Activated CD4-positive, alpha-beta T cell treated with anti-CD3 and anti-CD28 coated beads, Interleukin-2, amount 10 ng/mL, durations not matched to agents 24 days and 14 days (primary cell): ENCODE measurements at regions of chr11 and their contacts with region 1.

Region 1: GRCh38 chr11:61429691-61430582 is at the starts of genes CPSF7 and SDHAF2:
- DNase-seq: peak; percentile 99
- H3K4me3 Mint-ChIP-seq: peak within 1 kb of the TSS; percentile 97
- H3K27ac Mint-ChIP-seq: peak within 1 kb of the TSS; percentile 98
- H3K4me1 Mint-ChIP-seq: peaks cover 43% of the 10 kb centered on the region
- H3K27me3 Mint-ChIP-seq: no peaks in the 10 kb centered on the region
- total RNA-seq, gene CPSF7: 140 and 143 TPM in 2 replicates
- total RNA-seq, gene SDHAF2: 46.0 and 46.1 TPM in 2 replicates

Region 2: GRCh38 chr11:60363542-60364510 is 1066.1 kb before region 1 on chr11:
- intact Hi-C with region 1: no loop called
- DNase-seq: peak; percentile 88
- H3K4me3 Mint-ChIP-seq: no peak overlapping the region
- H3K27ac Mint-ChIP-seq: no peak overlapping the region
- H3K4me1 Mint-ChIP-seq: no peaks in the 10 kb centered on the region
- H3K27me3 Mint-ChIP-seq: peaks cover 8% of the 10 kb centered on the region

Region 3: GRCh38 chr11:61827571-61828378 is 397.8 kb after region 1 on chr11 and contains the start of gene FADS2:
- intact Hi-C with region 1: loop called (anchors 10 kb)
- DNase-seq: peak; percentile 98
- H3K4me3 Mint-ChIP-seq: peak within 1 kb of the TSS; percentile 92
- H3K27ac Mint-ChIP-seq: peak within 1 kb of the TSS; percentile 95
- H3K4me1 Mint-ChIP-seq: peaks cover 44% of the 10 kb centered on the region
- H3K27me3 Mint-ChIP-seq: no peaks in the 10 kb centered on the region
- total RNA-seq, gene FADS2: 278 and 283 TPM in 2 replicates

Region 4: GRCh38 chr11:62671575-62672389 is 1241.8 kb after region 1 on chr11 and contains the starts of genes LBHD1 and UQCC3:
- intact Hi-C with region 1: loop called (anchors 5 kb)
- DNase-seq: peak; percentile 94
- H3K4me3 Mint-ChIP-seq: peak within 1 kb of the TSS; percentile 88
- H3K27ac Mint-ChIP-seq: peak within 1 kb of the TSS; percentile 92
- H3K4me1 Mint-ChIP-seq: peaks cover 38% of the 10 kb centered on the region
- H3K27me3 Mint-ChIP-seq: no peaks in the 10 kb centered on the region
- total RNA-seq, gene LBHD1: 21.5 and 23.0 TPM in 2 replicates
- total RNA-seq, gene UQCC3: 8.6 and 9.4 TPM in 2 replicates